Psoas muscle (tissue), 8 donors: ENCODE measurements at regions of chr19 and their contacts with region 1.

Region 1: GRCh38 chr19:30227661-30228428 is 144.3 kb upstream of the ZNF536 start:
- DNase-seq: peak; percentile 56 to 72
- ATAC-seq: peak; percentile 68 to 80 (median 78)
- H3K4me3 ChIP-seq: peak overlapping the region; percentile 67
- H3K27ac ChIP-seq: no peak overlapping the region
- H3K4me1 ChIP-seq: peaks cover 17% of the 10 kb centered on the region
- H3K27me3 ChIP-seq: peaks cover 0 to 95% (median 24%) of the 10 kb centered on the region in 3 donors
- CTCF ChIP-seq: peak; percentile 57

Region 2: GRCh38 chr19:30406220-30407067 is 178.6 kb after region 1 on chr19:
- intact Hi-C with region 1: loop called in 1 of 2 experiments (anchors 10 kb)
- DNase-seq: no peak
- ATAC-seq: peak in 3 of 4 donors; percentile 55 to 73 (median 65)
- H3K4me3 ChIP-seq: no peak overlapping the region
- H3K27ac ChIP-seq: no peak overlapping the region
- H3K4me1 ChIP-seq: no peaks in the 10 kb centered on the region
- H3K27me3 ChIP-seq: no peaks in the 10 kb centered on the region
- CTCF ChIP-seq: peak; percentile 30

Region 3: DNA sequence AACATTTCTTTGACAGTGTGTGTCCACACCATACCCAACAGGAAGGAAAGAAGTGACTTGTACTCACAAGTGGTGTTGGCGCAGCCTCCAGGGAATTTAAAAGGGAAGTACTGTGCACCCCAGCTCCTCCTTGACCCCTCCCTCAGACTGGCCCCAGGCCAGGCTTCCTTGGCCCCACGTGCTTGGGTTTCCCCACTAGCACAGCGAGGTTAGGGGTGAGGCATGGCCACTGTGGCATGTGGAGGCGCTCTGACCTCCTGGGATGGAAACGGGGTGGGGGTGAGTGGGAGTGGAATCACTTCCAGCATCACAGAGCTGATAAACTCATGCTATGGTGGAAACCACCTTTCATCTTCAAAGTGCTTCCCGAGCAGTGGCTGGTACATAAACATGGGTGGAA is 312.9 kb after region 1 on chr19:
- intact Hi-C with region 1: no loop called
- DNase-seq: no peak
- ATAC-seq: no peak
- H3K4me3 ChIP-seq: no peak overlapping the region
- H3K27ac ChIP-seq: no peak overlapping the region
- H3K4me1 ChIP-seq: no peaks in the 10 kb centered on the region
- H3K27me3 ChIP-seq: peaks cover 0 to 6% (median 2%) of the 10 kb centered on the region in 3 donors
- CTCF ChIP-seq: no peak